Activated T-helper 2 cell treated with anti-CD3 and anti-CD28 coated beads, Interferon-gamma antibody, Interleukin-2, Interleukin-4, amounts not matched to agents 10 μg/mL and 5 μg/mL and 100 μg/mL, durations not matched to agents 14 hours and 24 hours and 36 hours (primary cell): ENCODE measurements at regions of chr13 and their contacts with region 1.

Region 1: GRCh38 chr13:99033814-99034213 is 56.0 kb upstream of the DOCK9 start:
- DNase-seq: no peak
- H3K4me3 Mint-ChIP-seq: no peak overlapping the region
- H3K27ac Mint-ChIP-seq: no peak overlapping the region
- H3K4me1 Mint-ChIP-seq: peaks cover 33% of the 10 kb centered on the region
- H3K27me3 Mint-ChIP-seq: no peaks in the 10 kb centered on the region

Region 2: GRCh38 chr13:98869408-98870090 is 164.3 kb before region 1 on chr13:
- intact Hi-C with region 1: loop called (anchors 1 kb)
- DNase-seq: no peak
- H3K4me3 Mint-ChIP-seq: no peak overlapping the region
- H3K27ac Mint-ChIP-seq: no peak overlapping the region
- H3K4me1 Mint-ChIP-seq: peaks cover 21% of the 10 kb centered on the region
- H3K27me3 Mint-ChIP-seq: no peaks in the 10 kb centered on the region

Region 3: GRCh38 chr13:98986226-98986846 is 47.5 kb before region 1 on chr13:
- intact Hi-C with region 1: loop called (anchors 5 kb)
- DNase-seq: no peak
- H3K4me3 Mint-ChIP-seq: no peak overlapping the region
- H3K27ac Mint-ChIP-seq: no peak overlapping the region
- H3K4me1 Mint-ChIP-seq: peaks cover 45% of the 10 kb centered on the region
- H3K27me3 Mint-ChIP-seq: no peaks in the 10 kb centered on the region

Region 4: GRCh38 chr13:99075268-99076191 is 41.7 kb after region 1 on chr13:
- intact Hi-C with region 1: loop called (anchors 2 kb)
- DNase-seq: peak; percentile 50
- H3K4me3 Mint-ChIP-seq: peak overlapping the region; percentile 45
- H3K27ac Mint-ChIP-seq: peak overlapping the region; percentile 81
- H3K4me1 Mint-ChIP-seq: peaks cover 65% of the 10 kb centered on the region
- H3K27me3 Mint-ChIP-seq: no peaks in the 10 kb centered on the region

Region 5: GRCh38 chr13:99093997-99094396 is 60.2 kb after region 1 on chr13:
- intact Hi-C with region 1: no loop called
- DNase-seq: no peak
- H3K4me3 Mint-ChIP-seq: no peak overlapping the region
- H3K27ac Mint-ChIP-seq: no peak overlapping the region
- H3K4me1 Mint-ChIP-seq: no peaks in the 10 kb centered on the region
- H3K27me3 Mint-ChIP-seq: no peaks in the 10 kb centered on the region

Region 6: DNA sequence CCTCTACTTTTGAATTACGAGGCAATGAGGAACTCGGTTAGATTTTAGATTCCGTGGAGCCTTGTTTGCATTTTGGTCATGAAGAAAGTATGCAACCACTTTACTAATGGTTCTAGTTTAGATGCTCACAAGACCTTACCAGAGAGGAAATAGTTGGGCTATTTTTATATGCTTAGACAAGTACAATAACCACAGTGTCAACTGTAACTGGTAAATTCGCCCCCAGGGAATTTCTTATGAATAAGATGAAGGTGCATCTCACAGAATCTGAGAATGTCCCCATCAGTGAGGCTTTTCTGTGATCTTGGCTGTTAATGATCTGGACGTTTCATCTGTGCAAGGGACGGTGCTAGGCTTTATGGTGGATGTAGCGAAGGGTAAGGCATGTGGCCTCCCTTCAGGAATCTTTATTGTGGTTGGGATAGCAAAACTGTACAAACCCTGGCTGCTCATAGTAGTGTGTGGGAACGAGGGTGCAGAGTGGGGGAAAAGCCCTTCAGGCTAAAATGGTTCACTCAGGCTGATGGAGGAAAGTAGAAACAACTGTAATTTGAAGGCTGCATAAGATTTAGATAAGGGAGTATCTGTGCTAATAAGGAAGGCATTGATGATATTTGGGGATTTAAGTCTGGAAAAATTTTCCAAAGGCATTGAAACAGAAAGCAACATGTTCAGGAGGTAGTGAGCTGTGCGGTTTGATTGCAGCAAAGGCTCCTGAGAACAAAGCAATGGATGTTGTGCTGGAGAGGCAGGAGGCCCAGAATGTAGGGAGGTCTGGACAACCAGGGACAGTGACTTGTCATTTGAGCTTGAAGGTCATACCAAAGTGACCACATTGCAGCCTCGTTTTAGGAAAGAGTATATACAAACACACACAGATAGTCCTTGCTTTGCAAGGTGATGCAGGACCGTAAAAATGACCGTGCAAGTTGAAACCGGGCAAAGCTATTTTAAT is 195.2 kb after region 1 on chr13:
- intact Hi-C with region 1: loop called (anchors 5 kb)
- DNase-seq: no peak
- H3K4me3 Mint-ChIP-seq: peak overlapping the region; percentile 66
- H3K27ac Mint-ChIP-seq: peak overlapping the region; percentile 94
- H3K4me1 Mint-ChIP-seq: peaks cover 54% of the 10 kb centered on the region
- H3K27me3 Mint-ChIP-seq: no peaks in the 10 kb centered on the region